Cardiac septum (tissue), 1 donor: ENCODE measurements at regions of chr10 and their contacts with region 1.

Region 1: DNA sequence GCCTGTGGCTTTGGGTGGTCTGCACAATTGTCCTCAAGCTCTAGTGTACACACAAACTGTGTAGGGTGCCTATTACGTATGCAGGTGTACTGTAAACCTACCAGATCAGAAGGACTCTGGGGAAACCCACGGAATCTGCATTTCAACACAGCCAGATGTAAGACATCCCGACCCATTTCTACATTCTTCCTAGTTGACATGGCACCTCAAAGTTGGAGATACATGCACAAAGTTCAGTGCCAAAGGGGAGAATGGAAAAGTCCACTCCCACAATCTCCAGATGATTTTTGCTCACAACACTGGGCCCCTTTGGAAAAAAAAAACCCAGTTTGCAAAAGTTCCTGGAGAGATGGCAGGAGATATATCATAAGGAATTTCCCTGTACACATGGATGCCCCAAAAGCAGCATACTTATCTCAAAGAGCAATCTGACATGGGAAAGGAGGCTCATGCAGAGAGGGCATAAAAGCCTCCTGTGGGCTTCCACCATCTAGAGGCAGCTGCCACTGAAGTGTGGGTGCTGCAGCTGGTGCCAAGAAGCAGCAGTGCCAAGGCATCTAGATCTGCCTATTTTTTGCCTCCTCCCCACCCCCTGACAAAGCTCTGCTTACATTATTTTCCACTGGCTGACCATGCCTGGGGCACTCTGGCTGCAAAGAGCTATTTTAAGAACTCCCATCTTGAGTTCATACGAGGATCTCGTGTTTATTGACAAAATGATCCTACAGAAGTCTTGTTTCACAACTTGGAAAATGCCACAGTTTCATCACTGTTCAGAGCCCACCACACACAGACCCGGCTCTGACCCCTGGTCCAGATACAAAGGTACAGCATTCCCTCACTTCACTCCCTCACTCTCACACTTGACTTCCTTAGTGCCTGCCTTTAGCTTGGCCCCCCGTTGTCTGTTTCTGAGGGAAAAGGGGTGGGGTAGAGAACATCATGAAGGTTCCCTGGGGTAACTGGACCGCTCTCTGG is 12.9 kb downstream of the TECTB start:
- DNase-seq: no peak

Region 2: DNA sequence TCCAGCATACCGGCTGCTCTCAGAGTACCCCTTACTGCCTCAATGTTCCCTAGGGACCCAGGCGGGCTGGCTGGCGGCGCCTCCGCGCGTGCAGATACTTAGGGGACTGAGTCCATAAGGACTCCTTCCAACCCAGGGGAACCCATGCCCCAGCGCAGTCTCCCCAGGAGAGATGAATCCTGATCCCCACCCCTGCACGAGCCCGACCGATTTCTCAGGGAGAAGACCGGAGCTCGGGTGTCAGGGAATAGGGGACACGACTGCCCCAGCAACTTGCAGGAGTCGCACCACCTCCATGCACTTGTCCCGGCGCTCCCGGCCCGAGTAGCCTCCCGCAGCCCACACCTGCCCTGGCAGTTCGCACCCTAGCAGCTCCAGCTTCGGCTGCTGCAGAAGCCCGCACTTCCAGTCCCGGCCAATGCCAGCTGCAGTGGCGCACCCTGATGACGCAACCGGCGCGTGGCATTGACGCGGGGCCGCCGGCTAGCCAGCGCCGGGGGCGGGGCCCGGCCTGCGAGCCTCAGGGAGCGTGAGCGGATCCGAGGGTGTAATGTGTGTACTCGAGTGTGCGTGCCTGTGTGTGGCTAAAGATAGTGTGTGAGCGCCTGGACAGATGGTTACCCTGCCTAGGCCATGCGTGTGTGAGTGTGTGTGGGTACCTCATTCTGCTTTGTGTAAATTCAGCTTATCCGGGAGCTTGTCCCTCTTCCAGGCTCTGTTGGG is 112.7 kb before region 1 on chr10 and contains the start of gene GPAM:
- intact Hi-C with region 1: loop called (anchors 5 kb)
- DNase-seq: peak; percentile 96
- total RNA-seq, gene GPAM: 11.5 TPM

Region 3: GRCh38 chr10:112202561-112203241 is 93.4 kb before region 1 on chr10:
- intact Hi-C with region 1: loop called (anchors 5 kb)
- DNase-seq: no peak

Region 4: GRCh38 chr10:112389147-112389822 is 93.1 kb after region 1 on chr10:
- intact Hi-C with region 1: no loop called
- DNase-seq: no peak

Region 5: DNA sequence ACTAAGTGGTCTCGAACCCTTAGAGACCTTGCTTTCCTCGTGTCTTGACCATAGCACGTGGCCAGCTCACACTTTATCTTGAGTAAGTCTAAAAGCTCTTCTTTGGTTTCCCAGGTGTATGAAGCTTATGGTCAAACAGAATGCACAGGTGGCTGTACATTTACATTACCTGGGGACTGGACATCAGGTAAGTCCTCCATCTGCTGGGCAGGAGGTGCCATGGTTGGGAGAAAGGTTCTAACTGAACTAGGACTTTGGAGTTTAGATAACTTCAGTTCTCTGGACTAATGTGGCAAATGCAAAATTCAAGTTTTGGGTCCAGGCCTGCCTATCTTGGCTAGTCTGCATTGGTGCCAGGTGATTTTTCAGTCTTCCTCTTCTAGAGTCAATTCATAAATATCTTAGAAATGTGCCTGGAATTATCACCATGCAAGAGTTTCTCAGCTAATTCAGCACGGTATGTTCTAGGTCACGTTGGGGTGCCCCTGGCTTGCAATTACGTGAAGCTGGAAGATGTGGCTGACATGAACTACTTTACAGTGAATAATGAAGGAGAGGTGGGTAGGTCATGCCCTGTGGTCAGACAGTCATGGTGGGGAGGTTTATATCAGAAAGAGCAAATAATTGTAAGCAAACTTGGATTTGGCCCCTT is 125.5 kb after region 1 on chr10:
- intact Hi-C with region 1: no loop called
- DNase-seq: no peak